Cardiac septum (tissue), 1 donor: ENCODE measurements at regions of chr2 and their contacts with region 1.

Region 1: DNA sequence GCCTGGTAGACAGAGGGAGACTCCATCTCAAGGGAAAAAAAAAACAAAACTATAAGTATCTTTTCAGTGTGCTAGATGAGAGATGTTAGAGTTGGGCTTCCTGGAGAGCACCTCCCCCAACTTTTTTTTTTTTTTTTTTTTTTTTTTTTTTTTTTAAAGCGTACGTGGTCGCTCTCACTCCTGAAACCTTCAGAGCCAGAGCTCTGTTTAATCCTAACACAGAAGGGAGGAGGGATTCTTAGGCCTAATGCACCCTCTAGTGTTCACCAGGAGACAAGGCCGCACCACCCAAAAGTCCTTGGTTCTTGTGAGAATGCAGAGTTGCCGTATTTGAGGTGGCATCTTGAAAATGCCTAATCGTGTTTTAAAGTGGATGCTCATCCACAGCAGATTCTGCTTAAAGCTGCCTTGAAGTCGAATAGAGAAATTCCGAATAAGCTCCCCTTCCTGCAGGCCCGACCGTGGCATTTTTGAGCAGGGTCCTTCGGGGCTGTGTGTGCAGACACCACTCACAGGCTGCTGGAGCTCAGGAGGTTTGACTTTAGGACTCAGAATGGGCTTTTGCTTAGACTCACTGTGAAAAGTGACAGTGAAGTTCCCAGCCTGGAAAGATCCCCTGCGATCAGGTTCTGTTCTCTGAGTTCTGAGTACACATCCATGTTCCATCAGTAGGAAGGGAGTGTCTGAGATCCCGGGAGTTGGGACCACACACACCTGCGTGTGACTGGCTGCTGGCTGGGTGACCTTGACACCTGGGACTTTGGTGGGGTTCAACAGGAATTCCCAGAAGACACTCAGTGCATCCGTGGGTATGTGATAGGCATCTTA is 252.6 kb downstream of the AGAP1 start:
- DNase-seq: no peak

Region 2: DNA sequence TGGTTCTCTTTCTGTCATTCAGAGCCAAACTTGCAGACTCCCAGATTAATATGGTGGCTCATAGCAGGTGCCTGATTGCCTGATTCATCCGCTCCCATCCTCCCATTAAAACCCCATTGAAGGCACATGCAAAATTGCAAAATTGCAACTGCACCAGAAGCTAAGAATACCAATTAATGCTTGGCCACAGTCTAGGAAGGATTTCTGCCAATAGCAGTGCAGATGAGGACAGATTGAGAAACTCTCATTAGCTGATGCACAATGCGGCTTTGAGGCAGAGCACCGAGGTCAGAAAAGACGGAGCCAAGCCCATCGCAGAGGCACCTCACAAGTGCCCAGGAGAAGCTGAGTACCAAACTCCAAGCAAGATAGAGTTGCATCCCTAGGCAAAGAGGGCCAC is 1422.4 kb before region 1 on chr2:
- intact Hi-C with region 1: no loop called
- DNase-seq: no peak

Region 3: DNA sequence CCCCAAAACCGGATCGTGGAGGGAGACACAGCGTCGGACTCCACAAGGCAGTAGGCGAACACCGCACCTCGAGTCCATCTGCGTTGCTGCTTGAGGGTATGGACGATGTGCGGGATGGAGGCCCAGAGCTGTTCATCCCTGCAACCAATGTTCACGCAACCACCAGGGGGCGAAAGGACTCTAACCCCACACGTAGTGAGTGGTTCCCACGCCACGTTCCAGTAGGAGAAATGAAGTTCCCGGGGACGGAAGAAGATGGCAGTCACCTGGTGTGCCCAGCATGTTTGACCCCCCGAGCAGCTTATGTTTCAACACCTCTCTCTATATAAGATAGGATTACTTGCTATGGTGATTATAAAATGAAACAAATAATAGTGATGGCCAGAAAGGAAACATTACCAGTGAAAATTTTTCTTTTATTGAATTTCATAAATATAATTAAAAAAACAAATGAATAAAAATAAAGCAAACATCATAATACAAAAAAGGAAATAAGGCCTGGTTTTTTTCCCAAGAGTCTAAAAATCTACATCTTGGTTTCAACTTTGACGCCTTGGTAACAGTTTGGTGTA is 610.4 kb before region 1 on chr2:
- intact Hi-C with region 1: loop called (anchors 5 kb)
- DNase-seq: peak; percentile 87

Region 4: GRCh38 chr2:235433860-235434259 is 312.6 kb before region 1 on chr2:
- intact Hi-C with region 1: loop called (anchors 5 kb)
- DNase-seq: no peak

Region 5: GRCh38 chr2:235669269-235669831 is 77.1 kb before region 1 on chr2:
- intact Hi-C with region 1: loop called (anchors 2 kb)
- DNase-seq: peak; percentile 77

Region 6: DNA sequence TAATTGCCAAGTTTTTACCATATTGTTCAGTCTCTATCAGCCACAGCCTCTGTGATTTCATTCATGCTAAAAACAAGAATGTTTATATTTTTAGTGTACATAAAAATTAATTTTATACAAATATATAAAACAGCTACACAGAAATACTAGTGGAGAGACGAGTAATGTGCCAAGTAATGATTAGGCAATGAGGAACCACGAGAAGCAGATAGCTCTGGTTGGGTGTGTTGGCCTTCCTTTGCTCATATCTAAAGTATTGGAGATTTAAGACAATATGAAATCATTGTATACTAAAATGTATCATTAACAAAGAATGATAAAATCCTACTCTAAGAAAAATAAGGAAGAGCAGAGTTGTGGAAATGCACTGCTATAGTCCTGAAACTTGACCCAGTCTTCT is 74.1 kb after region 1 on chr2:
- intact Hi-C with region 1: no loop called
- DNase-seq: no peak